Sciatic nerve (tissue), 2 donors: ENCODE measurements at regions of chr15 and their contacts with region 1.

Region 1: GRCh38 chr15:72339777-72340177 is 19.8 kb upstream of the CELF6 start:
- DNase-seq: no peak
- ATAC-seq: peak; percentile 85

Region 2: GRCh38 chr15:72199711-72200212 is 140.0 kb before region 1 on chr15:
- intact Hi-C with region 1: no loop called
- DNase-seq: peak; percentile 81
- ATAC-seq: peak; percentile 73

Region 3: GRCh38 chr15:72680931-72681330 is 341.2 kb after region 1 on chr15:
- intact Hi-C with region 1: loop called (anchors 5 kb)
- DNase-seq: no peak
- ATAC-seq: no peak